MCF 10A (cell line): ENCODE measurements at regions of chr1 and their contacts with region 1.

Region 1: DNA sequence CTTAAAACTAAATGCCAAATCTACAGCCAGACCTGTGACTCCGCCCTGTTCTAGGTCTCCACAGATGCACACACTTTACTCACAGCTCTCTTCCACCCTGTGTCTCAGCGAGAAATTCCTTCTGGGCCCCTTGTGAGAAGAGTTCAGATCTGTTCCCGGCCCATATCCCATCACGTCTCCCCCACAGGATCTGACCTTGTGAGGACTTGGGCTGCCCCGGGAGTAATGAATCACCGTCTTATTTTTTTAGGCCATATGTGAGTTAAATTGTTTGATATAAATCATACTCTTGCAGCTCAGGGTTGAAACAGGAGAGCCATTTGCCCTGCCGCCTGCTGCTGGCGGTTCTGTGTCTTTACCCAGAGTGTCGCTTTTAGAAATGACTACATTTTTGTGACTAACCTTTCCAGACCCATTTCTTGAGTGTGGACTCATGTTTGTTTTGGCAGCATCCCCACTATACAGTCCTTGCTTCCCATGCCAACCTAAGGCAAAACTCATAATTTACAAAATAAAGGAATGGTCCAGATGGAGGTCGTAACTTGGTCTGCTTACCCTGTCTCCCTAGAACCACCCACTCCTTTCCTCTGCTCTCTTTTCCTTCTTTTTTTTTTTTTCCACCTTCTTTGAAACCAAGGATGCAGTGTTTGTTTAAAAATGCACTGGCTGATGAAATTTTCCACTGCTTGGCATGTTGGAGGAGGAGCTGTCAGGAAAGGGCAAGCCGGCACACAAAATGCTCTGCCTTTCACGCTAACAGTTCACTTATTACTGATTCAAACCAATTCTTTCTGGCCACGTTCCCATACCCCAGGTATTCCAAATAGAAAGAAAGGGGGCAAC is 98.0 kb upstream of the C1orf105 start:
- DNase-seq: peak; percentile 89
- H3K4me3 Mint-ChIP-seq: no peak overlapping the region
- H3K27ac Mint-ChIP-seq: no peak overlapping the region
- H3K4me1 Mint-ChIP-seq: peaks cover 13% of the 10 kb centered on the region
- H3K27me3 Mint-ChIP-seq: no peaks in the 10 kb centered on the region
- CTCF ChIP-seq: no peak

Region 2: DNA sequence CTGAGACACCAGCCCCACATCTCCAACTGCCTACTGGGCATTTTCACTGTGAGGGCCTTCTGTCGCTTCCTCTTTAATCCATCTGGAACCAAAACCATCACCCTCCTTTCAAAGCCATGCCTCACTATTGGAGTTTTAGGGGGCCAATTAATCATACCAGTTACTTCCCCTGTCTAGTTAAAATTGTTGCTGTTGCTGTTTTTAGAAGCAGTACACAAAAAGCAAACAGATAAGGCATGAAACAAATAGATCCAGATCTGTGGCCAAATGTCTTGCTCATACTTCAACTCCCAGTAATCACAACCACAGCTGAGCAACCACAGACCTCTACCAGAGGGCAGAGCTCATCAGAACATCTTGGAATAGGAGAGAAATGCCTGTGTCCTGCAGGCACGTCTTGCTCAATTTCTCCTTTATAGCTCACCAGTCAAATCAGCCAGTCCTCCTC is 35.8 kb before region 1 on chr1:
- CTCF ChIA-PET with region 1: interaction called, 6 read pairs
- POLR2A ChIA-PET with region 1: interaction called, 41 read pairs
- intact Hi-C with region 1: no loop called
- DNase-seq: peak; percentile 94
- H3K4me3 Mint-ChIP-seq: no peak overlapping the region
- H3K27ac Mint-ChIP-seq: peak overlapping the region; percentile 61
- H3K4me1 Mint-ChIP-seq: peaks cover 26% of the 10 kb centered on the region
- H3K27me3 Mint-ChIP-seq: no peaks in the 10 kb centered on the region
- CTCF ChIP-seq: no peak

Region 3: DNA sequence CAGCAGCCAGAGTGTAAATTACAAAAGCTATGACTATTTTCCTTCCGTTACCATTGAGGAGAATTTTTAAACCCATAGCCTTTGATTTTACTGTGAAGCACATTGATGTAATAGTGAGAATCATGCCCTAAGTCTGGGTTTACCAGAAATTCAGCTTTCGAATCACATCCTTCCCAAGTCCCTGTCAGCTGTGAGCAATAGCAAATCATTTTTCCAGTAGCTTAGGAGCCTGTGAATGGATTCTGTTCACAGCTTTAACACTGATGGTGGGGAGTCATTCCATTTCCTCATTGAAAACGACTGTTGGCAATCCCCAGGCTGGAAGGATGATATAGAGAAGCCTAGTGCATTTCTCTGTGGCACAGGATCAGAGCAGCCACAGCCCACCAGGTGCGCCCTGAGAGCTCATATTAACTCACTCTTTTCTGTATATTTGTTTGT is 15.9 kb after region 1 on chr1:
- CTCF ChIA-PET with region 1: interaction called, 3 read pairs
- POLR2A ChIA-PET with region 1: interaction called, 38 read pairs
- intact Hi-C with region 1: no loop called
- DNase-seq: no peak
- H3K4me3 Mint-ChIP-seq: no peak overlapping the region
- H3K27ac Mint-ChIP-seq: no peak overlapping the region
- H3K4me1 Mint-ChIP-seq: peaks cover 18% of the 10 kb centered on the region
- H3K27me3 Mint-ChIP-seq: no peaks in the 10 kb centered on the region
- CTCF ChIP-seq: no peak

Region 4: DNA sequence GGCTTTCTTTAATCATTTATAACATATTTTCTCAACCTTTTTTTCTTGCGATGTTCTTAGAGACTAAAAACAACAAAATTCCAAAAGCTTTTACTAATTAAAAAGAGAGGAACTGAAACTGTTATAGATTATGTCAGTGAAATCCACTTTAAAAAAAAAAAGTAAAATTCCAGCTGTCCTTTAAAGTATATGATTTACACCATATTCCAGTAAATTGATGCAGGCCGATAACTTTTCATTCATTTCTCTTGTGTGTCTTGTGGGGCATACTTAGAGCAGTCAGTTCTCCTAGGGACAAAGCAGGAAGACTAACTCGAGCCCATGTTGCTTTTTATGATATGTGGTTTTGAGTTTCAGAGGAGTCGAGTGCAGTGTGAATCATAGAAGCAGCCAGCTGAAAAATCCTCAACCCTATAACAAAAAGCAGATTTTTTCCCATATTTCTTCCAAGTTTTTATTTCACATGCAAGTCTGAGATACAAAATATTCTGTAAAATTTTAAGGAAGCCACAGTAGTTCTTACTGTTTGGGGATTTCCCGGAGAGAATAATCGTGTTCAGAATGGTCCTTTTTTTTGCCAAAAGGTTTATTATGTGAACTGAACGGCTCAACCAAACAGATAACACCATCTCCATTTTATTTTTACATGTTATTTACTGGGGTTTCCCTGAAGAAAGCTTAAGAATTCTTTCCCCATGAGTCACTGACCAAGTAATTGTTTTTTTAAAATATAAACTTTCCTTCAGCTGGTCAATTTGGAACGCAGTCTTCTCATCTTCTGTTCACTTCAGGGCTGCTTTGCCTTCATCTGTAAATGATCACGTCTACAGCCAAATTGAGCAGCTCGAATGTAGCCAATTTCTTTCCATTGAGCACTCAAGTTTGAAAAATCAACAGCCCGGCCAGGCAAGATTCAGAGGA is 21.1 kb after region 1 on chr1:
- CTCF ChIA-PET with region 1: interaction called, 3 read pairs
- POLR2A ChIA-PET with region 1: interaction called, 38 read pairs
- intact Hi-C with region 1: no loop called
- DNase-seq: peak; percentile 72
- H3K4me3 Mint-ChIP-seq: peak overlapping the region; percentile 51
- H3K27ac Mint-ChIP-seq: peak overlapping the region; percentile 98
- H3K4me1 Mint-ChIP-seq: peaks cover 14% of the 10 kb centered on the region
- H3K27me3 Mint-ChIP-seq: no peaks in the 10 kb centered on the region
- CTCF ChIP-seq: no peak

Region 5: DNA sequence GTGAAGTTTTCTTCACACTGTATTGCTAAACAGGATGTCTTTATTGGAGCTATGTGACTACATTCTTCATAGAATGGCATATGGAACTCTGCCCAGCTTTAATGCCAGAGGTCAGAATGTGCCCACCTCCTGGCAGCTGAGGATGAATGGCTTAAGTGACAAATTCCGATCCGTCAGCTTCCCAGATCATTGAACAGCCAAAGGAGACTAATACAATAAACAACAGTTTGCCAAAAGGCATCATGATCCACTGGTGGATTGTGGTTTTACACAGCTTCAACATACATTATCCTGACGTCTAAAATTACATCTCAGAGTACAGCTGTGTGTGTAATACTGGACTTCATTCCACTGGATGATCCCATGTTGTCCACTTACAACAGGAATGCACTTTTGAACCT is 29.3 kb after region 1 on chr1:
- CTCF ChIA-PET with region 1: no interaction called
- POLR2A ChIA-PET with region 1: interaction called, 21 read pairs
- intact Hi-C with region 1: no loop called
- DNase-seq: peak; percentile 71
- H3K4me3 Mint-ChIP-seq: no peak overlapping the region
- H3K27ac Mint-ChIP-seq: peak overlapping the region; percentile 73
- H3K4me1 Mint-ChIP-seq: peaks cover 52% of the 10 kb centered on the region
- H3K27me3 Mint-ChIP-seq: no peaks in the 10 kb centered on the region
- CTCF ChIP-seq: no peak

Region 6: GRCh38 chr1:172588296-172589291 is 266.2 kb after region 1 on chr1:
- CTCF ChIA-PET with region 1: no interaction called
- POLR2A ChIA-PET with region 1: no interaction called
- intact Hi-C with region 1: no loop called
- DNase-seq: peak; percentile 84
- H3K4me3 Mint-ChIP-seq: peak overlapping the region; percentile 50
- H3K27ac Mint-ChIP-seq: peak overlapping the region; percentile 88
- H3K4me1 Mint-ChIP-seq: peaks cover 40% of the 10 kb centered on the region
- H3K27me3 Mint-ChIP-seq: no peaks in the 10 kb centered on the region
- CTCF ChIP-seq: no peak